GM10248 (cell line): ENCODE measurements at regions of chr14 and their contacts with region 1.

Region 1: GRCh38 chr14:55212634-55213033 is 21.2 kb upstream of the DLGAP5 start:
- DNase-seq: no peak
- CTCF ChIP-seq: no peak

Region 2: DNA sequence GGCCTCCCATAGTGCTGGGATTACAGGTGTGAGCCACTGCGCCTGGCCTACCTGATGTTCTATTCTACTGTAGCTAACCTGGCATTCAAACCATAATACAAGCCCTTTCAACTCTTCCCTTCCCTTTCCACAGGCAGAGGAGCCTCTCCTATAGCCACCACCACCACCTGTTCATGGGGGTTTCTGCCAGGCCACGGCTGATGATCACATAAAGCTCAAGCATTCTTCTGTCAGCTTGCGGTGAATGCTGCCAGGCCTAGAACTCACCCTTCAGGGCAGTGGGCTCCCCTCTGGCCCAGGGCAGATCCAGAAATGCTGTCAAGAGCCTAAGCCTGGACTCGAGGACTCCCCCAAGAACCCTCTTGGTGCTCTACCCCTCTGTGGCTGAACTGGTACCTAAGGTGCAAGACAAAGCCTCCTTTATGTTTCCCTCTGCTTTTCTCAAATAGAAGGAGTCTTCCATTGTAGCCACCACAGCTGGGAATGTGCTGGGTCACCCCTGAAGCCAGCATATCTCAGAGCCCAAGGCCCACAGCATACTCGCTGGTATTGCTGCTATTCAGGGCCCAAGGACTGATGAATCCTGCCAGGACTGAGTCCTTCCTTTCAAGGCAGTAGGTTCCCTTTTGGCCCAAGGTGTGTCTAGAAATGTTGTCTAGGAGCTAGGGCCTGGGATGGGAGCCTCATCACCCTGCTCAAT is 17.8 kb before region 1 on chr14:
- CTCF ChIA-PET with region 1: interaction called, 13 read pairs
- POLR2A ChIA-PET with region 1: no interaction called
- DNase-seq: no peak
- CTCF ChIP-seq: no peak

Region 3: DNA sequence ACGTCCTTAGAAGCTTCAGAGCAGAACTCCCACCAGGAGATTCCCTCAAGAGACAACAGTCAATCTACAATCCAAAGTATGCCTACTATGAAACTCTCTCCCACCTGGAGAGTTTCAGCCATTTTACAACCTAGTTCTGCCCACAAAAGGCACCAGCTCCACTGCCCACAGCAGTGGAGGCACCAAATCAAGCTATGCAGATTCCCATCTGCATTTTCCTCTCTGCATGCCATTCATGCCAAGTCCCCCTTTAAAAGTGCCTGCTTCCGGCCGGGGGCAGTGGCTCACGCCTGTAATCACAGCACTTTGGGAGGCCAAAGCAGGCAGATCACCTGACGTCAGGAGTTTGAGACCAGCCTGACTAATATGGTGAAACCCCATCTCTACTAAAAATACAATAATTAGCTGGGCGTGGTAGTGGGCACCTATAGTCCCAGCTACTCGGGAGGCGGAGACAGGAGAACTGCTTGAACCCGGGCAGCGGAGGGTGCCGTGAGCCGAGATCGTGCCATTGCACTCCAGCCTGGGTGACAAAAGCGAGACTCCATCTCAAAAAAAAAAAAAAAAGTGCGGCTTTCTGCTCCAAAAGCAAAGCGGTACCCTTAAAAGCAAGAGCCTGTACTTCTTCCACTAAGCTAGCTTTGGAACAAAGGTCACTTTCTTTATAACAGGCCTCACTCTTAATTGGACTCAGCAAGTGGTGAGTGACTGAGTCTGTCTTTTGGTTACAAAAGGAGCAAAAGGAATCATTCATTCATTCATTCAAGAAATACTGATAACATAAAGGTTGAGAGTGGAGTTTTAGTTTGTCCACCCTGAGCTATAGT is 11.2 kb before region 1 on chr14:
- CTCF ChIA-PET with region 1: interaction called, 13 read pairs
- POLR2A ChIA-PET with region 1: no interaction called
- DNase-seq: no peak
- CTCF ChIP-seq: no peak

Region 4: GRCh38 chr14:55430024-55430690 is 217.5 kb after region 1 on chr14:
- CTCF ChIA-PET with region 1: interaction called, 12 read pairs
- POLR2A ChIA-PET with region 1: no interaction called
- DNase-seq: peak; percentile 65
- CTCF ChIP-seq: peak; percentile 40